ENCODE measurements at regions of chr19 and their contacts with region 1.

Region 1: GRCh38 chr19:47428177-47428894 is 9.0 kb upstream of the MEIS3 start:
- DNase-seq: peak; percentile 95
- H3K4me3 Mint-ChIP-seq: no peak overlapping the region
- H3K27ac Mint-ChIP-seq: no peak overlapping the region
- H3K4me1 Mint-ChIP-seq: peaks cover 20% of the 10 kb centered on the region
- H3K27me3 Mint-ChIP-seq: peaks cover 27% of the 10 kb centered on the region

Region 2: GRCh38 chr19:47280183-47280797 is 148.0 kb before region 1 on chr19:
- intact Hi-C with region 1: no loop called
- DNase-seq: peak; percentile 90
- H3K4me3 Mint-ChIP-seq: no peak overlapping the region
- H3K27ac Mint-ChIP-seq: no peak overlapping the region
- H3K4me1 Mint-ChIP-seq: peaks cover 17% of the 10 kb centered on the region
- H3K27me3 Mint-ChIP-seq: no peaks in the 10 kb centered on the region

Region 3: GRCh38 chr19:47447470-47448359 is 19.4 kb after region 1 on chr19:
- intact Hi-C with region 1: loop called (anchors 1 kb)
- DNase-seq: peak; percentile 92
- H3K4me3 Mint-ChIP-seq: peak overlapping the region; percentile 75
- H3K27ac Mint-ChIP-seq: peak overlapping the region; percentile 16
- H3K4me1 Mint-ChIP-seq: peaks cover 41% of the 10 kb centered on the region
- H3K27me3 Mint-ChIP-seq: peaks cover 68% of the 10 kb centered on the region

Region 4: DNA sequence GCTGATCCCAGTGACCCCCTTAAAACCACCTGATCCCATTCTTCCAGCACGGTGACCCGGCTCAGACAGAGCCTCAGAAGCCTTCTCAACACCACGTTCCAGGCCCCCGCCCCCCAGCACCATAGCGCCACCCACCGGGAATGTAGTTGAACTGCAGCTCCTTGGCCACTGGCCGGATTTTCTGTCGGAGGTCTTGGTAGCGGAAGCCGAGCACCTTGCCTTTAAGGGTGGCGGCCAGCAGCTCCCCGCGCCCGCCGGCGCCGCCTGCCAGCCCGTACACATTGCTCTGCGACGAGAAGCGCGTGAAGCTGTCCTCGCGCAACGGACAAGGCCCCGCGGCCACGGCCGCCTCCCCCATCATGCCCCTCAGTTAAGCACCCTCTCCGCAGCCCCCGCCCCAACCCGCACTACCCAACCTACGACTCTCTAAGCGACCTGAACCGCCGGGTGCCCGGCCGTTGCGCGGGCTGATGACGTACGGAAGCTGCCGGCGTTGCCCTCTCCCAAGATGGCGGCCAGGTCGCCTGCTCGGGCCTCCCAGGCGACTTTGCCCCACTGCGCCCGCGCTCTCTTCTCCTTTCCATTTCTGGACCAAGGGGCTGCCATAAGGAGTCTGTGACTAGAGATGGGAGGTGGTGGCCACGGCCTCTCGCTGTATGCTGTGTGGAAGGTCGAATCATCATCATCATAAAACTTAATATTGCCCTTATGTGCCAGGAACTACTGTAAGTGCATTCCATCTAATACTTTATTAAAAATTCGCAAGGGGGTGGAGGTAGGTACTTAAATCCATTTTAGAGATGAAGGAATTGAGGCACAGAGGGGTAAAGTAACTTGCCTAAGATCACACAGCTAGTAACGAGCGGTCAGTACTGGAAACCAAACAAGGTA is 55.7 kb after region 1 on chr19 and contains the start of gene KPTN:
- intact Hi-C with region 1: no loop called
- DNase-seq: peak; percentile 97
- H3K4me3 Mint-ChIP-seq: peak within 1 kb of the TSS; percentile 99
- H3K27ac Mint-ChIP-seq: peak within 1 kb of the TSS; percentile 98
- H3K4me1 Mint-ChIP-seq: peaks cover 21% of the 10 kb centered on the region
- H3K27me3 Mint-ChIP-seq: no peaks in the 10 kb centered on the region
- total RNA-seq, gene KPTN: 10.1 and 12.2 TPM in 2 replicates